GM10248 (cell line): ENCODE measurements at regions of chr19 and their contacts with region 1.

Region 1: GRCh38 chr19:15101479-15102082 is 5.6 kb upstream of the SYDE1 start:
- DNase-seq: no peak
- CTCF ChIP-seq: peak; percentile 52

Region 2: GRCh38 chr19:14997981-14998380 is 103.6 kb before region 1 on chr19:
- CTCF ChIA-PET with region 1: no interaction called
- POLR2A ChIA-PET with region 1: no interaction called
- DNase-seq: no peak
- CTCF ChIP-seq: no peak

Region 3: DNA sequence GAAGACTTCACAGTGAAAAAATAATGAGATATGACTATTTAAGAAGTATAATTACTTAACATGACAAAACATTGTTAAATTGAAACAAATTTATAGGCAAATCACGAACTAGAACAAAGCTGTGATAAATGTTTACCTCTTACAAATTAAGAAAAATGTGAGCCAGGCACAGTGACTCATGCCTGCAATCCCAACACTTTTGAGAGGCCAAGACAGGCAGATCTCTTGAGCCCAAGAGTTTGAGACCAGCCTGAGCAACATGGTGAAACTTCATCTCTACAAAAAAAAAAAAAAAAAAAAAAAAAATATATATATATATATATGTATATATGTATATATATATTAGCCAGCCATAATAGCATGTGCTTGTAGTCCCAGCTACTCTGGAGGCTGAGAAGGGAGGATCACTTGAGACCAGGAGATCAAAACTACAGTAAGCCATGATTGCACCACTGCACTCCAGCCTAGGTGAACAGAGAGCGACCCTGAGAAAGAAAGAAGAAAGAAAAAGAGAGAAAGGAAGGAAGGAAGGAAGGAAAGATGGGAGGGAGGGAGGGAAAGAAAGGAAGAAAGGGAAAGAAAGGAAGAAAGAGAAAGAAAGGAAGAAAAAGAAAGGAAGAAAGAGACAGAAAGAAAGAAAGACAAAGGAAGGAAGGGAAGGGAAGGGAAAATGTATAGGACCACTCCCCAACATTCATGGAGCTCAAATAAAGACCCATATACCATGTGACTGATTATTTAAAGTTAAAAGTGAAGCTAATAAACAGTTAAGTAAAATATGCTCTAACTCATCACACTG is 45.3 kb after region 1 on chr19:
- CTCF ChIA-PET with region 1: interaction called, 33 read pairs
- POLR2A ChIA-PET with region 1: no interaction called
- DNase-seq: no peak
- CTCF ChIP-seq: no peak

Region 4: GRCh38 chr19:15154002-15154612 is 52.5 kb after region 1 on chr19:
- CTCF ChIA-PET with region 1: interaction called, 33 read pairs
- POLR2A ChIA-PET with region 1: no interaction called
- DNase-seq: no peak
- CTCF ChIP-seq: peak; percentile 40